Naive thymus-derived CD8-positive, alpha-beta T cell (primary cell): ENCODE measurements at regions of chr19 and their contacts with region 1.

Region 1: GRCh38 chr19:49766007-49766937 is 529 bp upstream of the AP2A1 start:
- DNase-seq: peak; percentile 95 to 100 (median 99)
- ATAC-seq: peak; percentile 88 to 90
- H3K4me3 Mint-ChIP-seq: peak overlapping the region; percentile 77 to 96 (median 92)
- H3K27ac Mint-ChIP-seq: peak overlapping the region; percentile 87 to 97 (median 96)
- H3K4me1 Mint-ChIP-seq: peaks cover 31 to 42% (median 36%) of the 10 kb centered on the region in 4 donors
- H3K27me3 Mint-ChIP-seq: peaks cover 0 to 4% (median 0%) of the 10 kb centered on the region in 5 donors

Region 2: GRCh38 chr19:49718511-49718910 is 47.8 kb before region 1 on chr19:
- POLR2A ChIA-PET with region 1: interaction called, 40 read pairs
- DNase-seq: no peak
- ATAC-seq: no peak
- H3K4me3 Mint-ChIP-seq: peak overlapping the region; percentile 52 to 97 (median 80)
- H3K27ac Mint-ChIP-seq: peak overlapping the region; percentile 60 to 100 (median 98)
- H3K4me1 Mint-ChIP-seq: peaks cover 6 to 32% (median 10%) of the 10 kb centered on the region in 4 donors
- H3K27me3 Mint-ChIP-seq: no peaks in the 10 kb centered on the region

Region 3: DNA sequence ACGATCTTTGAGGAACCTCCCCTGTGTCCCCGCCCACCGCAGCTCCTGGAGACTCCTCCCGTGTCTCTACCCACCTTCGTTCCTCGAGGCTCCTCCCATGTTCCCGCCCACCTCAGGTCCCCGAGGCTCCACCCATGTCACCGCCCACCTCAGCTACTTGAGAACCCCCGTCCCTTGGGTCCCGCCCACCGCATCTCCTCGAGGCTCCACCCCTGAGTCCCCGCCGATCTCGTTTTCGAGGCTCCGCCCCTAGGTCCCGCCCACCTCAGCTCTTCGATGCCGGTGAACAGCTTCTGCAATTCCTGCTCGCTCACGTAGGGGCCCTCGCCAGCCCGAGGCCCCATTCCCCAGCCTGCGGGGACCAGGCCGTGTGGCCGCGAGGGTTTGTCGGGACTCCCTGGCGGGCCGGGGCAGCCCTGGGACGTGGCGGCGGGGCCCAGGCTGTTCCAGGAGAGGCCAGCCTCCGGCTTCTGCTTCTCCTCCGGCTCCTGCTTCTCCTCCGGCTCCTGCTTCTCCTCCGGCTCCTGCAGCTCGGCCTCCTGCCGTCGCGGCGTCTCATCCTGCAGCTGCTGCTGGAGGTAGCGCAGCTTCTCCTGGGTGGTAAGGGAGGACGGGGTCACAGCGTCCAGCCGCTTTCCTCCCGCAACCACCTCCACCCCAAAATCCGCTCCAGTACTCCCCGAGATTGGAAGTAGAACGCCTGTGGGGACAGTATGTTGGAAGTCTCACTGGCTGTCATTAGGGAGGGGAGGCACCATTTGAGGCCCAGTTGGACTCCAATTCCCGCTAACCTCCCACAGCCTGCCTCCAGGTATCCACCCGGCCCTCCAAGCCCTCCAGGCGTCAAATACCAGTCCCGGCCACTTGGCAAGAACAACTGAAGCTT is 19.8 kb before region 1 on chr19:
- POLR2A ChIA-PET with region 1: interaction called, 10 read pairs
- DNase-seq: peak in 9 of 10 donors; percentile 19 to 68 (median 48)
- ATAC-seq: peak; percentile 50 to 84
- H3K4me3 Mint-ChIP-seq: no peak overlapping the region
- H3K27ac Mint-ChIP-seq: peak overlapping the region in 1 of 10 donors; percentile 40
- H3K4me1 Mint-ChIP-seq: peaks cover 0 to 2% (median 2%) of the 10 kb centered on the region in 4 donors
- H3K27me3 Mint-ChIP-seq: peaks cover 0 to 5% (median 0%) of the 10 kb centered on the region in 5 donors

Region 4: DNA sequence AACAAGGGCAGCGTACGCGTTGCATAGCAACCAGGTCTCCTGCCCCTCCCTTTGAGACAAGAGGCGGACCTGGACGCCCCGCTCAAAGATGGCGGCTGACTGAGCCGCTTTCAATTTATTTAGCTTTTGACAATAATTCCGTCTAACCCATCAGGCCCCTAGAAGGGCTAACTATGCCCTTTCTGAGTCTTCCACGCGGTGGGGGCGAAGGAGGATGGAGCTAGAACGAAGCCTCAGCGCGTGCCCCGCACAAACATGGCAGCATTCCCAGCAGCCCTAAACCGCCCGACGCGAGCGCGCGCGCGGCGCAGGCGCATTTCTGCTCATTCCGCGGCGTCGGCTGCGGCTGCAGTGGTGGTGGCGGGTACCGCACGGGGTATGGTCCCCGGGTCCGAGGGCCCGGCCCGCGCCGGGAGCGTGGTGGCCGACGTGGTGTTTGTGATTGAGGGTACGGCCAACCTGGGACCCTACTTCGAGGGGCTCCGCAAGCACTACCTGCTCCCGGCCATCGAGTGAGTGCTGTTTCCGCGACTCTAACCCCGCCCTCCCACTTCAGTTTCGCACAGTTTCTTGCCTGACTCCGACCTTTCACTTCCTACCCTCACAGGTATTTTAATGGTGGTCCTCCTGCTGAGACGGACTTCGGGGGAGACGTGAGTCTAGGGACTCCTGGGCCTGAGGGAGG is 51.8 kb after region 1 on chr19 and contains the start of gene MED25:
- POLR2A ChIA-PET with region 1: interaction called, 18 read pairs
- DNase-seq: peak; percentile 81 to 98 (median 89)
- ATAC-seq: peak; percentile 55
- H3K4me3 Mint-ChIP-seq: peak within 1 kb of the TSS; percentile 94 to 100 (median 99)
- H3K27ac Mint-ChIP-seq: peak within 1 kb of the TSS; percentile 98 to 100 (median 100)
- H3K4me1 Mint-ChIP-seq: peaks cover 11 to 40% (median 32%) of the 10 kb centered on the region in 4 donors
- H3K27me3 Mint-ChIP-seq: peaks cover 0 to 2% (median 0%) of the 10 kb centered on the region in 5 donors
- polyA plus RNA-seq, gene MED25: 7.5 to 19.2 (median 13.1) TPM